ENCODE measurements at regions of chr11 and their contacts with region 1.

Region 1: DNA sequence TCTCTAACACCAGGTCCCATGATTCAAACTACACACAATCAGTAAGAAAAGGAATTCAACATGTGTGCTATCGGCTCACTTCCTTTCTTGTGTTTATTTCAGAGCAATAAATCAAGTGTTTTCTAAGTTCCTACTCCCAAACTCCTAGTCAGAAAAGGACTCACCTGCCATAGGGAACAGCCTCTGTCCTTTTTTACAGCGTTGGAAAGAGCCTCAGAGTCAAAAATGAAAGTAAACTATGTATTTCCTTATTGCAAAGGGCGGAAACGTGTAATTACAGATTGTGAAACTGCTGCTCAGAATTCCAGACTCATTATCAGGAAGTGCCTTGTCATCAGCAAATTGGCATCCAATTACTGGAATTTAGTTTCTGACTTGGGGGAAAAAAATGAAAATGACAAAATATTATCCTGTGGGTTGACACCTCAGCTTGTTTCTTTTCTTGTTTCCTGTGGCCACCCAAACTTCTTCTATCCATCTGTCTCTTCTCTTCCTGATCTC is at the start of gene CASP4:
- DNase-seq: peak; percentile 72
- H3K4me3 Mint-ChIP-seq: peak within 1 kb of the TSS; percentile 95
- H3K27ac Mint-ChIP-seq: peak within 1 kb of the TSS; percentile 82
- H3K4me1 Mint-ChIP-seq: peaks cover 30% of the 10 kb centered on the region
- H3K27me3 Mint-ChIP-seq: no peaks in the 10 kb centered on the region
- total RNA-seq, gene CASP4: 25.0 and 29.2 TPM in 2 replicates

Region 2: DNA sequence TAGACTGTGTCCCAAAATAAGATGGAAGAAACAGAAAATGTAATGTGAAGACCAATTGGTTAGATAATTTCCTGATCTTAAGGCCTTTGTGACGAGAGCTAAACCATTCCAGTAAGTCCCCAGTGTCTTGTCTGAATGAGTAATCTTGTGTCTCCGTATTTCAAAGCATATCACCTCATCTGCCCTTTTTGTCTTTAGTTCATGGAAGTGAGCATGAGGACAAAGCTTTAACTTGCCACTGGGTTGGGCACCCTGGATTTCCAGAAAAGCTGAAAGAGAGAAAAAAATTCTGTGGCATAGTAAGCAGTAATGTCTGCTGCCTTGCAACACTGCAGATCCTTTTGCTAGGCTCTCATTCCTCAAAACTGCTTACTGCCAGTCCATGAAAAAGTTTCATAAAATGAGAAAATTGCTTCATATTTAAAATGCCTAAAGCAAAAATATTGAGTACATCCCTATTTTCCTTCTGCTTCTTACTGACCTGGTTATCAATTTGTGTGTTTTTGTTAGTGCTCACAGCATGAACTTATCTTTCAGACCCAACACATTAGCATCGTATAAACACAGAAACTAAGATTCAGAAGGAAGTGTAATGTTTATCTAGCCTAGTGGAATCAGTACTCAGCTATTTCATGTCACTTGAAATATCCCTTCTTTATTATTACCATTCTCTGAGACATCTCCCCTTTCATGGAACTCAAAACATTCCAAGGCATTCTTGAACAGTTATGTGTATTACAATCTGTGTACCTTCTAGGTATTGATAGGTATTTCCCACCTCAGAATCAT is 75.5 kb before region 1 on chr11:
- intact Hi-C with region 1: no loop called
- DNase-seq: no peak
- H3K4me3 Mint-ChIP-seq: no peak overlapping the region
- H3K27ac Mint-ChIP-seq: no peak overlapping the region
- H3K4me1 Mint-ChIP-seq: peaks cover 4% of the 10 kb centered on the region
- H3K27me3 Mint-ChIP-seq: peaks cover 2% of the 10 kb centered on the region

Region 3: GRCh38 chr11:104918113-104918824 is 50.1 kb before region 1 on chr11:
- intact Hi-C with region 1: loop called (anchors 5 kb)
- DNase-seq: peak; percentile 68
- H3K4me3 Mint-ChIP-seq: peak overlapping the region; percentile 81
- H3K27ac Mint-ChIP-seq: peak overlapping the region; percentile 79
- H3K4me1 Mint-ChIP-seq: peaks cover 35% of the 10 kb centered on the region
- H3K27me3 Mint-ChIP-seq: no peaks in the 10 kb centered on the region

Region 4: DNA sequence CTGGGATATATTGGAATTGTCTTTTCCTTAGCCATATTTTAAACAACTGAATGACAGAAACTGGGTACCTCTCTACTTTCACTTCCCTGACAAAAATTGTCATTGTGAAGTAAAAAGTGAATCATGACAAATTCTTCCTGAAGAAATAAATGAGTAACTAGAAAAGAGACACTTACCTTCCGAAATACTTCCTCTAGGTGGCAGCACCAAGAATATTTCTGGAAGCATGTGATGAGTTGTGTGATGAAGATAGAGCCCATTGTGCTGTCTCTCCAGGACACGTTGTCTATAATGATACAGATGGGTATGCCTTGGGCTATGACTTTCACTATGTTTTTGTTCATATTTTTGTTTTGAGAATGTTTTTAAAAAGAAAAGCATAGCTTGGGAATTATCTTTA is 21.5 kb before region 1 on chr11:
- intact Hi-C with region 1: loop called (anchors 1 kb)
- DNase-seq: peak; percentile 80
- H3K4me3 Mint-ChIP-seq: no peak overlapping the region
- H3K27ac Mint-ChIP-seq: no peak overlapping the region
- H3K4me1 Mint-ChIP-seq: peaks cover 8% of the 10 kb centered on the region
- H3K27me3 Mint-ChIP-seq: no peaks in the 10 kb centered on the region

Region 5: GRCh38 chr11:105044921-105045524 is 76.6 kb after region 1 on chr11 and contains the start of gene CARD16:
- intact Hi-C with region 1: loop called (anchors 5 kb)
- DNase-seq: peak; percentile 85
- H3K4me3 Mint-ChIP-seq: peak within 1 kb of the TSS; percentile 88
- H3K27ac Mint-ChIP-seq: peak within 1 kb of the TSS; percentile 83
- H3K4me1 Mint-ChIP-seq: peaks cover 35% of the 10 kb centered on the region
- H3K27me3 Mint-ChIP-seq: no peaks in the 10 kb centered on the region
- total RNA-seq, gene CARD16: 7.2 and 9.0 TPM in 2 replicates

Region 6: DNA sequence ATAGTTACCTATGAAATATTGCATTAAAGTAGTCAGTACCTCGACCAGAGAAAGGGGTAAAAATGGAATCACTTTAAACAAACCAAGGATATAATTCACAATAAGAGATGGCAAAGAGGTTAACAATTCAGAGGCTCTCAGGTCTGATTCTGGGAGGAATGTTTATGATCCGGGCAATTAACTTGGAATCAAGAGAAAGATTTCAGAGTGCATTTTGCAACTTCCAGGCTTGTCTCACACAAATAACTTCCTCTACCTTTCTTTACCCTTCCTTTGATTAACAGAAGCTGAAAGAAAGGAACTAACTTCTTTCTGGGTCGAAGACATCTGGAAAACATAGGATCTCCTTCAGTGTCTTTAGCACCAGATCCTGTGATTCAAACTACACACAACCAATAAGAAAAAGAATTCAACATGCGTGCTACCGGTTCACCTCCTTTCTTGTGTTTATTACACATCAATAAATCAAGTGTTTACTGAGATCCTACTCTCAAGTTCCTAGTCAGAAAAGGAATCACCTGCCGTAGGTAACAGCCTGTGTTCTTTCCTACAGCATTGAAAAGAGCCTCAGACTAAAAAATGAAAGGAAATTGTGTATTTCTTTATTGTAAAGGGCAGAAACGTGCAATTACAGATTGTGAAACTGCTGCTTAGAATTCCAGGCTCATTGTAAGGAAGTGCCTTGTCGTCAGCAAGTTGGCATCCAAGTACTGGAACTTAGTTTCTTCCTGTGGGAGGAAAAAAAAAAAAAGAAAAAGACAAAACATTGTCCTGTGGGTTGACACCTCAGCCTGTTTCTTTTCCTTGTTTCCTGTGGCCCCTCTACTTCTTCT is 141.7 kb after region 1 on chr11:
- intact Hi-C with region 1: loop called (anchors 10 kb)
- DNase-seq: no peak
- H3K4me3 Mint-ChIP-seq: no peak overlapping the region
- H3K27ac Mint-ChIP-seq: no peak overlapping the region
- H3K4me1 Mint-ChIP-seq: peaks cover 14% of the 10 kb centered on the region
- H3K27me3 Mint-ChIP-seq: peaks cover 25% of the 10 kb centered on the region

Measured in activated CD4-positive, alpha-beta T cell treated with anti-CD3 and anti-CD28 coated beads, Interleukin-2, amount 10 ng/mL, durations not matched to agents 24 days and 14 days (primary cell).